ENCODE measurements at regions of chr17 and their contacts with region 1.

Region 1: GRCh38 chr17:54968262-54968987 is at the starts of genes COX11 and STXBP4:
- DNase-seq: peak; percentile 100
- ATAC-seq: peak; percentile 96
- H3K4me3 ChIP-seq: peak within 1 kb of the TSS; percentile 92
- H3K27ac ChIP-seq: peak within 1 kb of the TSS; percentile 42
- H3K4me1 ChIP-seq: peaks cover 24% of the 10 kb centered on the region
- H3K27me3 ChIP-seq: no peaks in the 10 kb centered on the region
- CTCF ChIP-seq: peak; percentile 67; the same call in 1 of the 2 replicates
- total RNA-seq, gene COX11: 246 and 270 TPM in 2 replicates
- total RNA-seq, gene STXBP4: 6.2 and 10.3 TPM in 2 replicates

Region 2: DNA sequence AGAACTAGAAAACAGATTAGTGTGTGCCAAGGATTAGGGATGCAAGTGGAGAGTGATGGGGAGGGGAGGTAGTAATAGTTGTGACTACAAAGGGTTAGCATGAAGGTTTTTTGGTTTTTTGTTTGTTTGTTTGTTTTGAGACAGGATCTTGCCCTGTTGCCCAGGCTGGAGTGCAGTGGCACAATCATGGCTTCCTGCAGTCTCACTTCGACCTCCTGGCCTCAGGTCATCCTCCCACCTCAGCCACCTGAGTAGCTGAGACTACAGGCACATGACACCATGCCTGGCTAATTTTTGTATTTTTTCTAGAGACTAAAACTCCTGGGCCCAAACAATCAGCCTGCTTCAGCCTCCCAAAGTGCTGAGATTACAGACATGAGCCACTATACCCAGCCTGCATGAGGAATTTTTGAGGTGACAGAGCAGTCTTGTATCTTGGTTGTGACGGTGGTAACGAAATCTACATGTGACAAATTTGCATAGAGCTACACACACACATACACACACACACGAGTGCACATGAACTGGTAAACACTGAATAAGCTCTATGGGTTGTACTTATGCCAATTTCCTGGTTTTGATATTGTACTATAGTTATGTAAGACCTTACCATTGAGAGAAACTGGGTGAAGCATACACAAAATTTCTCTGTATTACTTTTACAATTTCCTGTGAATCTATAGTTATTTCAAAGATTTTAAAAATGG is 127.4 kb before region 1 on chr17:
- CTCF ChIA-PET with region 1: no interaction called
- POLR2A ChIA-PET with region 1: no interaction called
- intact Hi-C with region 1: no loop called
- DNase-seq: no peak
- ATAC-seq: no peak
- H3K4me3 ChIP-seq: no peak overlapping the region
- H3K27ac ChIP-seq: no peak overlapping the region
- H3K4me1 ChIP-seq: no peaks in the 10 kb centered on the region
- H3K27me3 ChIP-seq: no peaks in the 10 kb centered on the region
- CTCF ChIP-seq: no peak

Region 3: DNA sequence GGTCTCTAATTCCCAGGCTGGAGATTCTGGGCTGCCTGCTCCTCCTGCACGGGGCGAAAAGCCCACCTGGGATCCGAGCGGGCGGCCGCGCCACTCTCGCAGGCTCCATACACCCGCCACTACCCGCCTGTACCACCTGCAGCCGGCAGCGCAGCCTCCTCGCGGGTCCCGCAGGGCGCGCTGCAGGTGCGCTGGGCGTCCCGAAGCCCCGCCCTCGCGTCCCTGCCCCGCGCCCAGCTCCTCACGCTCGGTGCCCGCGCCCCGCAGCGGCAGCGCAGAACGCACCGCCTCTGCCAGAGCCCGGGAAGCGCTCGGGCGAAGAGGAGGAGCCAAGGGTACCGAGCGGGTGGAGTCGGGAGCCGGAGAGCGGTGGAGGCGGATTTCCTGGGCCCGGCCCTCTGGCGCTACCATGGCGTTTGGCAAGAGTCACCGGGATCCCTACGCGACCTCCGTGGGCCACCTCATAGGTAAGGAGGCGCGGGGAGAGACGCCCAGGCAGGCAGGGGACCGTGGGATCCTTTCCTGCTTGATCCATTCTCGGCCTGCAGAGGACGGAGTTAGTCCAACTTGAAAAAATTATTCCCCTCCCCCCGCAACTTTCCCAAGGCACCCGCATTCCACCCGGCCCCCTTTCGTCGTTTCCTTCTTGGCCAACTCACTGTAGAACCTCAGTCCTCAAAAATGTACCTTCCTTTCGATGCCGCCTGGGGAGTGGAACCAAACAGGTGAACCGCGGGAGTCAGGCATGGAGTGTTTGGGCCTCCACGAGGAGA is 67.8 kb before region 1 on chr17 and contains the start of gene TOM1L1:
- CTCF ChIA-PET with region 1: no interaction called
- POLR2A ChIA-PET with region 1: no interaction called
- intact Hi-C with region 1: loop called (anchors 1 kb)
- DNase-seq: peak; percentile 96
- ATAC-seq: peak; percentile 90
- H3K4me3 ChIP-seq: no peak within 1 kb of the TSS; the same call in none of the 2 replicates
- H3K27ac ChIP-seq: peak within 1 kb of the TSS; percentile 67
- H3K4me1 ChIP-seq: peaks cover 6% of the 10 kb centered on the region
- H3K27me3 ChIP-seq: no peaks in the 10 kb centered on the region
- CTCF ChIP-seq: peak; percentile 37
- total RNA-seq, gene TOM1L1: 35.4 and 48.1 TPM in 2 replicates

Region 4: GRCh38 chr17:54933921-54934320 is 34.5 kb before region 1 on chr17:
- CTCF ChIA-PET with region 1: no interaction called
- POLR2A ChIA-PET with region 1: no interaction called
- intact Hi-C with region 1: loop called (anchors 2 kb)
- DNase-seq: no peak
- ATAC-seq: no peak
- H3K4me3 ChIP-seq: no peak overlapping the region
- H3K27ac ChIP-seq: no peak overlapping the region
- H3K4me1 ChIP-seq: peaks cover 13% of the 10 kb centered on the region
- H3K27me3 ChIP-seq: no peaks in the 10 kb centered on the region
- CTCF ChIP-seq: no peak

Measured in PC-3 (cell line).